Activated CD4-positive, alpha-beta memory T cell treated with anti-CD3 and anti-CD28 coated beads, Interleukin-2, amount 10 ng/mL, durations not matched to agents 7 days and 5 days (primary cell): ENCODE measurements at regions of chr5 and their contacts with region 1.

Region 1: DNA sequence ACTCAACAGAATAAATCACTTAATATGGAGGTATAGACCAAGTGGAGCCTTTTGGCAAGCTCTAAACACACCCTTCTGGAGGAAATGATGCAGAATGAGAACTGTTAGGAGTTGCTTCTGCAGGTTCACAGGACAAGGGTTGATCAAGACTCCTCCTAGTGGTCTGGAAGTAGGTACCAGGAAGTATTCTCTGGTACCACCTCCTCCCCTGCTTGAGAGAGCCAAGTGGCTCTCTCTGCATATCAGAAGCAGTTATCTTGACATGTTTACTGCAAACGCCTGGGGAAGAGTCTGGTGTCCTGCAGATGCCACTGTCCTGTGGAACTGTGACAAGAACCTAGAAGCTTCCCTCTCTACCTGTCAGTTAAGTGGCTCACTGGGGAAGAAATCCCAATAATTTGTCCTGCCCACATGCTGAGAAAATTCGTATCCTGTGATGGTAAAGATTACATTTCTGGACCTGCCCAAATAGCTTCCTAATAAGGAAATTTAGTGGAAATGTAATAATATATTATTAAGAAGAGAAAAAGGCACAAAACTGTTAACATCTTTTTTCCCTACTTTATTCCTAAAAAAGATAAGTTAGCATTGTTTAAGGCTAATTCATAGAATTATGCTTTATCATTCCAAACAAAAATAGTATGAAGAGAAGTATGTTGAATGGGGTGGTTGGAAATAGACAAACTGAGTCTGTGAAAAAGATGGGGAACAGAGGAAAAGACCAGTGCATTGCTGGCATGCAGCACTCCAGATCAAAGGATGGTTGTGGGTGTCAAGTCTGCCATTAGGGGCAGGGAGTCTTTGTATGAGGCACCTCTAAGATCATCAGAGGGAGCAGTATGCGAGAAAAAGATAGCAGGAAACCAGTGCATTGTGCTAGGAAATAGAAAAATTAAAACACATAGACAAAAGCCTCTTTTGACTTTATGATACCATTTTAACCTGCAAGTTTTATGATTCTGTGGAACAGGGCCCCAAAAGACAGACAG is 118.8 kb downstream of the CDC42SE2 start:
- DNase-seq: peak; percentile 59
- H3K4me3 Mint-ChIP-seq: peak overlapping the region; percentile 53
- H3K27ac Mint-ChIP-seq: peak overlapping the region; percentile 94
- H3K4me1 Mint-ChIP-seq: peaks cover 90% of the 10 kb centered on the region
- H3K27me3 Mint-ChIP-seq: no peaks in the 10 kb centered on the region

Region 2: GRCh38 chr5:131252824-131253171 is 129.9 kb before region 1 on chr5:
- CTCF ChIA-PET with region 1: interaction called, 10 read pairs
- POLR2A ChIA-PET with region 1: interaction called, 68 read pairs
- DNase-seq: peak; percentile 90
- H3K4me3 Mint-ChIP-seq: peak overlapping the region; percentile 93
- H3K27ac Mint-ChIP-seq: peak overlapping the region; percentile 99
- H3K4me1 Mint-ChIP-seq: peaks cover 69% of the 10 kb centered on the region
- H3K27me3 Mint-ChIP-seq: no peaks in the 10 kb centered on the region

Region 3: DNA sequence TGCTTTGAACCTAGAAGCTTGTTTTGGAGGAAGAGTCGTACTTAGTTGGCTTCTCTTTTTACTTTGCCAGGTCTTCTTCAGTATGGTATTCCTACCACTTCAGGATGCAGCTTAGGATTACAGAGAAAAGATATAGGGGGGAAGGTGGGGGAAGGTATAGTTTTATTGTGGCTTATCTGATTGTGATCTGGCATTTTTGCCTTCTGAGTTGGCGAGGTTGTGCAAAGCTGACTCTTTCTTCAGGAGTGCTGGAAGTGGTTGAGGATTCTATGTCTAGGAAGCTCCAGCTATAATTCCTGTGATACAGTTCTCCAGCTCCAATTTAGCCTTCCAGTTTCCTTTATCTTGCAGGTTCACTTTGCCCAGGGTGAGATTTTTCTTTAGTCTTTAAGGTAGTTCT is 111.9 kb before region 1 on chr5:
- CTCF ChIA-PET with region 1: interaction called, 88 read pairs
- POLR2A ChIA-PET with region 1: interaction called, 234 read pairs
- DNase-seq: no peak
- H3K4me3 Mint-ChIP-seq: peak overlapping the region; percentile 75
- H3K27ac Mint-ChIP-seq: peak overlapping the region; percentile 88
- H3K4me1 Mint-ChIP-seq: peaks cover 76% of the 10 kb centered on the region
- H3K27me3 Mint-ChIP-seq: no peaks in the 10 kb centered on the region

Region 4: DNA sequence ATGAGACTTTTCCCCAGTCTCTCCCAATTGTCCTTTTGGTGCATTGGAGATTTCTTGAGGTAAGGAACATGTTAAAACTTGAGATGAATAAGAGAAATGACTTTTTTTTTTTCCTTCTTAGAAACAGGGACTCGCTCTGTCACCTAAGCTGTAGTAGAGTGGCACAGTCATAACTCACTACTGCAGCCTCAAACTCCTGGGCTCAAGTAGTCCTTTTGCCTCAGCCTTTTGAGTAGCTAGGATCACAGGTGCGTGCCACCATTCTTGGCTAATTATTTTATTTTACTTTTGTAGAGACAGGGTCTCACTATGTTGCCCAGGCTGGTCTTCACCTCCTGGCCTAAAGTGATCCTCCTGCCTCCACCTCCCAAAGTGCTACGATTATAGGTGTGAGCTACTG is 93.0 kb before region 1 on chr5:
- CTCF ChIA-PET with region 1: interaction called, 12 read pairs
- POLR2A ChIA-PET with region 1: interaction called, 6 read pairs
- DNase-seq: peak; percentile 40
- H3K4me3 Mint-ChIP-seq: peak overlapping the region; percentile 73
- H3K27ac Mint-ChIP-seq: peak overlapping the region; percentile 93
- H3K4me1 Mint-ChIP-seq: peaks cover 63% of the 10 kb centered on the region
- H3K27me3 Mint-ChIP-seq: no peaks in the 10 kb centered on the region

Region 5: DNA sequence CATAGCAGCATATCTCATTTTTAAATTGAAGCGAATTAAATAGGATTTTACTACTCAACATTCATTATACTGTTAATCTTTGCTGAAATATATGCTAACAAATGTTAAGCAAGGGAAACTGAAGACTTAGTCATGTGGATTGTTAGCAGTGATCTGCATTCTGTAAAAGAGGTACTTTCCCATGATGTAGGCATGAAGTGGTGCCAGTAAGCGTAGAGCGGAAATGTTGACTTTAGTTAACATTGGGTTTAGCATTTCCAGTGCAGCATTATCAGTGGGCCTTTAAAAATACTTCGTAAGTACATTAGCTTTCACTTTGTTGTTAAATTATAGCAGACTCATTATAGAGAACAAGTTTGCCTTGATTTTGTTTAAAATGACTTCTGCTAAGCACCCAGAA is 11.4 kb after region 1 on chr5:
- CTCF ChIA-PET with region 1: interaction called, 7 read pairs
- POLR2A ChIA-PET with region 1: interaction called, 151 read pairs
- DNase-seq: peak; percentile 50
- H3K4me3 Mint-ChIP-seq: peak overlapping the region; percentile 45
- H3K27ac Mint-ChIP-seq: peak overlapping the region; percentile 83
- H3K4me1 Mint-ChIP-seq: peaks cover 75% of the 10 kb centered on the region
- H3K27me3 Mint-ChIP-seq: no peaks in the 10 kb centered on the region